ENCODE measurements at regions of chrX and their contacts with region 1.

Region 1: GRCh38 chrX:68238568-68238967 is 194.7 kb downstream of the OPHN1 start:
- DNase-seq: peak; percentile 29
- H3K4me3 Mint-ChIP-seq: no peak overlapping the region
- H3K27ac Mint-ChIP-seq: no peak overlapping the region
- H3K4me1 Mint-ChIP-seq: no peaks in the 10 kb centered on the region
- H3K27me3 Mint-ChIP-seq: peaks cover 20% of the 10 kb centered on the region
- CTCF ChIP-seq: peak; percentile 37

Region 2: GRCh38 chrX:68209008-68209407 is 29.6 kb before region 1 on chrX:
- CTCF ChIA-PET with region 1: interaction called, 3 read pairs
- POLR2A ChIA-PET with region 1: no interaction called
- intact Hi-C with region 1: loop called (anchors 2 kb)
- DNase-seq: no peak
- H3K4me3 Mint-ChIP-seq: no peak overlapping the region
- H3K27ac Mint-ChIP-seq: no peak overlapping the region
- H3K4me1 Mint-ChIP-seq: no peaks in the 10 kb centered on the region
- H3K27me3 Mint-ChIP-seq: peaks cover 70% of the 10 kb centered on the region
- CTCF ChIP-seq: no peak

Measured in MCF 10A (cell line).